WTC11 (cell line): ENCODE measurements at regions of chr19 and their contacts with region 1.

Region 1: DNA sequence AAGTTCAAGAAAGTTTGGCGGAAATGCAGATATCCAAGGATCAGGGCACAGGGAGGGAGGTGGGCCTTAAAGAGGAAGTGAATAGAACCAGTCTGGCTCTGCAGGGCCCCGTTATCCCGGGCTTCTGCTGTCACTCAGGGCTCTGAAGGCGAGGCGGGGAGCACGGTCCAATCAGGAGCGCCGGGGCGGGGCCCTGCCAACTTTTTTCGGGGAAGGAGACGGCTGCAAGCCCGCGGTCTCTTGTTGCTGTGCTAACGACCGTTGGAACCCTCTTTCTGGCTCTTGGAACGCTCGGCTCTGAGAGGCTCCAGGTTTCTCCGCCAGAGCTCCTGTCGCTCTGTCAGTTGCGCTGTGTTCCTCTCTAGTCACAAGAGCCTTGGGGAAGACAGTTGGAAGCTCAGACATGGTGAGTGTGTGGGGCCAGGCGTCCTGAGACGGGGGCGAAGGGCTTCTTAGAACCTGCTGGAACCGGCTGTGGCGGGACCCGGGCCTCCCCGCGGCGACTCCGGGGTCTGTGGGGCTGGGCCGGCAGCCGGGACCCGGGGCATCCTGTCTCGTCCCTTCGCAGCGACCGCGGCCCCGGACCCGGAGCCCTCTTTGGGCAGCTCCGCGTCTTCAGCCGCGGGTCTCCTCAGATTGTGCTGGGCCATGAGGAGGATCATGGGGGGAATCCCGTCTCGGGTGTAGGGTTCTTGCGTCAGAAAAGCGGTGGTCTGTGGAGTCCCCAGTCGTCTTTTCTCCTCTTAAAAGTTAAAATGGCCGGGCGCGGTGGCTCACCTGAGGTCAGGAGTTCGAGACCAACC is 27.7 kb downstream of the ZNF844 start:
- DNase-seq: peak; percentile 94
- ATAC-seq: peak; percentile 98
- H3K4me3 Mint-ChIP-seq: peak overlapping the region; percentile 89
- H3K27ac Mint-ChIP-seq: peak overlapping the region; percentile 97
- H3K4me1 Mint-ChIP-seq: peaks cover 12% of the 10 kb centered on the region
- H3K27me3 Mint-ChIP-seq: no peaks in the 10 kb centered on the region
- CTCF ChIP-seq: no peak

Region 2: DNA sequence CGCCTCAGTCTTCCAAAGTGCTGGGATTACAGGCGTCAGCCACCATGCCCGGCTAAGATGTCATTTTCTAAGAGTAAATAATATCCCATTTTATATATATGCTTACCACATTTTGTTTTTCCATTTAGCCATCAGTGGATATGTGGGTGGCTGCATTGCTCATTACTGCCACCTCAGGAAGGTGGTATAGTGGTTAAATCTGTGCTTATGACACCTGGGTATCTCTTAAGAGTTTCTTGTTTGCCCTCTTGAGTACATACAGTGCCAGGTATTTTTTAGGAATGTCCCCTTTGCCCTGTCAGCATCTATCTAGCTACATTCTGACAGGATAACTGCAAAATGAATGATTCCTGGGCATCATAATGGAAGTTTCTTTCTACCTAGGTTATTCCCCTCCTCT is 190.0 kb before region 1 on chr19:
- CTCF ChIA-PET with region 1: no interaction called
- POLR2A ChIA-PET with region 1: no interaction called
- DNase-seq: no peak
- ATAC-seq: no peak
- H3K4me3 Mint-ChIP-seq: no peak overlapping the region
- H3K27ac Mint-ChIP-seq: no peak overlapping the region
- H3K4me1 Mint-ChIP-seq: no peaks in the 10 kb centered on the region
- H3K27me3 Mint-ChIP-seq: peaks cover 33% of the 10 kb centered on the region
- CTCF ChIP-seq: no peak

Region 3: DNA sequence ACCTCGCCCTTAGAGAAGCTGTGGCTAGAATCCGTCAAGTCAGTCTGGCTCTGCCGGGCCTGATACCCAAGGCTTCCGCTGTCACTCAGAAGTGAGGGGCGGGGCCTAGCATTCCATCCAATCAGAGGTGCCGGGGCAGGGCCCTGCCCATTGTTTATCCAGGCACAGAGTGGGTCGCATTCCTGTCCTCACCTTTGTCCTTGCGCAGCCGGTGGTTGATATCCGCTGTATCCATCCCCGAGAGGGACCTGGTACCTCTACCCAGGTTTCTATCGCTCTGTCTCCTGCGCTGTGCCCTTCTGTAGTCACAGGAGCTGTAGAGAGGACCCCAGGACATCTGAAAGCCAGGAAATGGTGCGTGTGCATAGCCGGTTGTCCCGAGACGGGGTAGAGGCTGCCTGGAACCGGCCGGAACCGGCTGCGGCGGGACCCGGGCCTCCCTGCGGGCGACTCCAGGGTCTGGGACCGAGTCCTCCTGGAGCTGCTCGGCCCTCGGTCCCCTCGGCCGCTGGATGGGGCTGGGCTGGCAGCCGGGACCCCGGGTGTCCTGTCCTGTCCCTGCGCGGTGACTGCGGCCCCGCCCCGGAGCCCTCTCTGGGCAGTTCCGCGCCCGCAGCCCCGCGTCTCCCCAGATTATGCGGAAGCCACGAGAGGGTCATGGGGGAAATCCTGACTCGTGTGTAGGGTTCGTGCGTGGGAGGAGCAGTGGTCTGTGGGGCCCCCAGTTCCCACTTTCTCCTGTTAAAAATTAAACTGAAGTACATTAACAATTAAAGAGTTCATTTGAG is 127.2 kb before region 1 on chr19 and contains the start of gene ZNF763:
- CTCF ChIA-PET with region 1: interaction called, 14 read pairs
- POLR2A ChIA-PET with region 1: no interaction called
- DNase-seq: peak; percentile 99
- ATAC-seq: peak; percentile 92
- H3K4me3 Mint-ChIP-seq: peak within 1 kb of the TSS; percentile 82
- H3K27ac Mint-ChIP-seq: peak within 1 kb of the TSS; percentile 96
- H3K4me1 Mint-ChIP-seq: peaks cover 22% of the 10 kb centered on the region
- H3K27me3 Mint-ChIP-seq: peaks cover 20% of the 10 kb centered on the region
- CTCF ChIP-seq: no peak
- total RNA-seq, gene ZNF763: 2.4 to 3.1 TPM (median 2.9 TPM) in 3 replicates

Region 4: GRCh38 chr19:12052497-12053169 is 39.6 kb before region 1 on chr19 and contains the start of gene ZNF878:
- CTCF ChIA-PET with region 1: interaction called, 20 read pairs
- POLR2A ChIA-PET with region 1: interaction called, 3 read pairs
- DNase-seq: peak; percentile 99
- ATAC-seq: peak; percentile 98
- H3K4me3 Mint-ChIP-seq: peak within 1 kb of the TSS; percentile 91
- H3K27ac Mint-ChIP-seq: peak within 1 kb of the TSS; percentile 98
- H3K4me1 Mint-ChIP-seq: peaks cover 18% of the 10 kb centered on the region
- H3K27me3 Mint-ChIP-seq: peaks cover 2% of the 10 kb centered on the region; the same call in 1 of the 2 replicates
- CTCF ChIP-seq: no peak
- total RNA-seq, gene ZNF878: 10.1 to 12.5 TPM (median 10.7 TPM) in 3 replicates

Region 5: DNA sequence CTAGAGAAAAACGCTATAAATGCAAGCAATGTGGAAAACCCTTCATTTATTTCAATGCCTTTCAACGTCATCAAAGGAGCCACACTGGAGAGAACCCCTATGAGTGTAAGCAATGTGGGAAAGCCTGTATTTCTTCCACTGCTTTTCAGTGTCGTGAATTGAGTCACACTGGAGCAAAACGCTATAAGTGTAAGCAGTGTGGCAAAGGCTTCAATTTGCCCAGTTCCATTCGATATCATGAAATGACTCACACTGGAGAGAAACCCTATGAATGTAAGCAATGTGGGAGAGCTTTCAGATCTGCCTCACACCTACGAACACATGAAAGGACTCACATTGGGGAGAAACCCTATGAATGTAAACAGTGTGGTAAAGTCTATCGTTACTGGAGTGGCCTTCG is 20.4 kb after region 1 on chr19:
- CTCF ChIA-PET with region 1: interaction called, 12 read pairs
- POLR2A ChIA-PET with region 1: no interaction called
- DNase-seq: no peak
- ATAC-seq: no peak
- H3K4me3 Mint-ChIP-seq: no peak overlapping the region
- H3K27ac Mint-ChIP-seq: peak overlapping the region; percentile 58
- H3K4me1 Mint-ChIP-seq: no peaks in the 10 kb centered on the region
- H3K27me3 Mint-ChIP-seq: peaks cover 5% of the 10 kb centered on the region; the same call in 1 of the 2 replicates
- CTCF ChIP-seq: no peak

Region 6: GRCh38 chr19:12156223-12157058 is 64.2 kb after region 1 on chr19 and contains the start of gene ZNF625:
- CTCF ChIA-PET with region 1: interaction called, 12 read pairs
- POLR2A ChIA-PET with region 1: no interaction called
- DNase-seq: peak; percentile 97
- ATAC-seq: peak; percentile 97
- H3K4me3 Mint-ChIP-seq: peak within 1 kb of the TSS; percentile 91
- H3K27ac Mint-ChIP-seq: peak within 1 kb of the TSS; percentile 95
- H3K4me1 Mint-ChIP-seq: peaks cover 12% of the 10 kb centered on the region
- H3K27me3 Mint-ChIP-seq: peaks cover 5% of the 10 kb centered on the region
- CTCF ChIP-seq: no peak
- total RNA-seq, gene ZNF625: 23.9 to 26.0 TPM (median 24.5 TPM) in 3 replicates

Region 7: DNA sequence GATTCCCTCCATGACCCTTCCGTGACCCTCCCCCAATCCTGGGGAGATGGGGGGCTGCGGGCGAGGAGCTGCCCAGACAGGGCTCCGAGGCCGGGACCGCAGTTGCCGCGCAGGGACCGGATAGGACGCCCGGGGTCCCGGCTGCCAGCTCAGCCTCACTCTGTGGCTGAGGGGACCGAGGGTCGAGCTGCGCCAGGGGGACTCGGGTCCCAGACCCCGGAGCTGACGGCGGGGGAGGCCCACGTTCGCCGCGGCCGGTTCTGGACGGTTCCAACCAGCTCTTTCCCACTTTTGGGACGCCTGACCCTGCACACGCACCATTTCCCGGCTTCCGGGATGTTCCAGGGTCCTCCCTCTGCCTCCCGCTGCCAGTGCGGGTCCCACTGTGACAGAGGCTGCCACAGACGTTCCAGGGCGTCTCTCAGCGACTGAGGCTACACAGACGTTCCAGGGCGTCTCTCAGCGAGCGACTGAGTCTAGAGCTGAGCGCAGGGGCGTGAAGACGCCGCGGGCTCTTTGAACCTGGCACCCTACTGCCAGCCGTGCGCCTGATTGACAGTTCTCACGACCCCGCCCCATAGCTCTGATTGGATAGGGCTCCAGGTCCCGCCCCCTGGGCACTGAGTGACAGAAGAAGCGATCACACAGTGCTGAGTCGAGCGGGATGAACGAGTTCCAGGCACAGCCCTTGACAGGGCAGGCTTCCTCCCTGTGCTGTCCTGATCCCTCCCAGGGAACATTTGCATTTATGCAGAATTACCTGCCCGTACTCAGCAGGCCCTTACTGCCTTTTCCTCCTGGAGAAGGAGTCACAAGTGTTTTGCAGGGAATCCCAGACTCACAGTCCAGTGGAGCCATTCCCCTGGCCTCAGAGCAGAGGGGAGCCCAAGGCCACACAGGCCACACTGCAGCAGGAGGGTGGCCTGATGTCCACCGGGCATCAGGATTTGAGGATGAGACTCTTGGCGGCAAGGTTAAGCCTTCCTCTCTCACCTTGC is 241.2 kb after region 1 on chr19 and contains the start of gene ZNF563:
- CTCF ChIA-PET with region 1: interaction called, 11 read pairs
- POLR2A ChIA-PET with region 1: no interaction called
- DNase-seq: peak; percentile 99
- ATAC-seq: peak; percentile 100
- H3K4me3 Mint-ChIP-seq: peak within 1 kb of the TSS; percentile 96
- H3K27ac Mint-ChIP-seq: peak within 1 kb of the TSS; percentile 96
- H3K4me1 Mint-ChIP-seq: peaks cover 25% of the 10 kb centered on the region
- H3K27me3 Mint-ChIP-seq: peaks cover 11% of the 10 kb centered on the region
- CTCF ChIP-seq: no peak
- total RNA-seq, gene ZNF563: 4.5 to 5.6 TPM (median 4.5 TPM) in 3 replicates